ENCODE measurements at regions of chr2 and their contacts with region 1.

Region 1: DNA sequence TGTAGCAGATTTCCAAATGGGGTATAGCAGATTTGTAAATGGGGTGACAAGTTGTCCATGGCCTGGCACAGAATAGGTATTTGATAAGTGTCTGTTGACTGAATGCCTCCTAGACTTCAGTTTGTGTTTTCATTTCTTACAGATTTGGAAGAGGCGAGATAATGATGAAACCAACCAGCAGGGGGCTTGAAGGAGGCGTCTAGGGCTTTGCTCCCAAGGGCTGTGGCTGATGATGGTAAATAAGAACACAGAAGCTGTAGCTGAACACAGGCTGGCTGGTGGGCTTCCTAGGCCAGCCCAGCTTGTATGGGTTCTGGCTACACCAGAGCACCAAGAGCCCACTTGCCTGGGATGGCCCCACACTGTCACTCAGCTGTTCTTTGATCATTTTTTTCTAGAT is 19.4 kb downstream of the SFTPB start:
- DNase-seq: no peak
- H3K4me3 ChIP-seq: no peak overlapping the region
- H3K27me3 ChIP-seq: no peaks in the 10 kb centered on the region
- CTCF ChIP-seq: peak; percentile 68

Region 2: DNA sequence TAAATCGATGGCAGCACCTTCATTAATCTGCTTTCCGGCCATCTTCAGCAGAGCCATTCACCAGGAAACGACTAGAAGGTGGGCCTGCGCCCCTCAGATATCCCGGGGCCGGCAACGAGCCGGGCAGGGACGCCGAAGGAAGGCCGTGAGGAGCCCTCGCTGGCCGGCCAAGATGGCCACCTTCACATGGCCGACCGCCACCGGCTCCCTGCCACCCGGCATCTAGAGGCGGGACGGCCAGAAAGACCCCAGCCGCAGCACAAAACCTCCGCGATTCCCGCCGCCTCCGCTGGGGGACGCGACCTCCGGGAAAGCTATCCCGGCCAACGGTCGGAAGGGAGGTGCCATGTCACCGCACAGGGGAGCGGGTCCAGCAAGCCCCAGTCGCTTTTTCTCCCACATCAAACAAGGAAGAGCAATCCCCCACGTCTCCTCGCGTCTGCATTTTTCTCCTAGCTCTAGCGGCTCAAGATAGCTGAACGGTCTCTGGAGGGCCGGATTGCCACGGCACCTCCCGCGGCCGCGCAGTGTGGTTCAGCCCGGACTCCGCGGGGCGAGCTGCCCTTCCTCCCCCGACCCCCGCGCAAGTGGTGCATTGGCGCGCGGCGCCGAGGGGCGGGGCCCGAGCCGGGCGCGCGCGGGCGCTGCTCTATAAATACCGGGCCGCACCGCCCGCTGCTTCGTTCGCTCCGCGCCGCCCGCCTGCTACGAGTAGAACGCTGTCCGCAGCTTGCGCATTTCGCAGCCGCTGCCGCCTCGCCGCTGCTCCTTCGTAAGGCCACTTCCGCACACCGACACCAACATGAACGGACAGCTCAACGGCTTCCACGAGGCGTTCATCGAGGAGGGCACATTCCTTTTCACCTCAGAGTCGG is 109.9 kb before region 1 on chr2 and contains the start of gene MAT2A:
- CTCF ChIA-PET with region 1: no interaction called
- POLR2A ChIA-PET with region 1: interaction called, 17 read pairs
- DNase-seq: no peak
- H3K4me3 ChIP-seq: peak within 1 kb of the TSS; percentile 98
- H3K27me3 ChIP-seq: no peaks in the 10 kb centered on the region
- CTCF ChIP-seq: peak; percentile 83
- polyA plus RNA-seq, gene MAT2A: 261 and 302 TPM in 2 replicates

Region 3: DNA sequence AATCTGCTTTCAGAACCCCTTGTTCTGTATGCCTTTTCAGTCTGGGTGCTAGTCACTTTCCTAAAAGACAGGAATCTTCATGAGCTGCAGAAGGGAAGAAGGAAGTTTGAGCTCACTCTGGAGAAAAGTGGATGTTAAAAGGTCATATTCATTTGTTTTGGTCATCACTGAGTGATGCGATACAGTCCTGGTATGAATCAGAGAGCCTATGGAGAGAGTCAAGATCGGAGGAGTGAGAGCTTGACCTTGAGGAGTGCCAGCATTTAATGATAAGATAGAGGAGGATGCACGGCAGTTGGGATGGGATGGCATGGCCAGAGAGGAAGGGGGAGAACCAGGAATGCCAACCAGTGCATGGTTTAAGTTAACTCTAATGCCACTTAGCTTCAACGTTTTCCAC is 13.0 kb before region 1 on chr2:
- CTCF ChIA-PET with region 1: interaction called, 61 read pairs
- POLR2A ChIA-PET with region 1: no interaction called
- DNase-seq: no peak
- H3K4me3 ChIP-seq: no peak overlapping the region
- H3K27me3 ChIP-seq: no peaks in the 10 kb centered on the region
- CTCF ChIP-seq: no peak

Region 4: DNA sequence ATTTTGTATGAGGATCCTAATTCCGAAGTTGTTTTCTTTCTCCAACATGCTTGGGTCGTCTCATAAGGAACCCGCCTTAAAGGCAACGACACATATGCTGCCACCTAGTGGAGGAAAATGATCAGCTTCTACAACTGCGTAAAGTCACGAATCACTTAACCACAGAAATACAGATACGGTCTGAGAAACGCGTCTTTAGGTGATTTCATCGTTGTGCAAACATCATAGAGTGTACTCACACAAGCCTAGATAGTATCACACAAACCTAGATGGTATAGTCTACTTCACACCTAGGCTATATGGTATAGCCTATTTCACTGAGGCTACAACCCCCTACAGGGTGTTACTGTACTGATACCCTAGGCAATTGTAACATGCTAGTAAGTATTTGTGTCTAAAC is 58.7 kb after region 1 on chr2:
- CTCF ChIA-PET with region 1: interaction called, 81 read pairs
- POLR2A ChIA-PET with region 1: no interaction called
- DNase-seq: peak; percentile 58
- H3K4me3 ChIP-seq: no peak overlapping the region
- H3K27me3 ChIP-seq: no peaks in the 10 kb centered on the region; the same call in 1 of the 2 replicates
- CTCF ChIP-seq: peak; percentile 85

Region 5: GRCh38 chr2:85723707-85724360 is 75.2 kb after region 1 on chr2:
- CTCF ChIA-PET with region 1: interaction called, 11 read pairs
- POLR2A ChIA-PET with region 1: interaction called, 3 read pairs
- DNase-seq: no peak
- H3K4me3 ChIP-seq: no peak overlapping the region
- H3K27me3 ChIP-seq: no peaks in the 10 kb centered on the region
- CTCF ChIP-seq: no peak

Region 6: DNA sequence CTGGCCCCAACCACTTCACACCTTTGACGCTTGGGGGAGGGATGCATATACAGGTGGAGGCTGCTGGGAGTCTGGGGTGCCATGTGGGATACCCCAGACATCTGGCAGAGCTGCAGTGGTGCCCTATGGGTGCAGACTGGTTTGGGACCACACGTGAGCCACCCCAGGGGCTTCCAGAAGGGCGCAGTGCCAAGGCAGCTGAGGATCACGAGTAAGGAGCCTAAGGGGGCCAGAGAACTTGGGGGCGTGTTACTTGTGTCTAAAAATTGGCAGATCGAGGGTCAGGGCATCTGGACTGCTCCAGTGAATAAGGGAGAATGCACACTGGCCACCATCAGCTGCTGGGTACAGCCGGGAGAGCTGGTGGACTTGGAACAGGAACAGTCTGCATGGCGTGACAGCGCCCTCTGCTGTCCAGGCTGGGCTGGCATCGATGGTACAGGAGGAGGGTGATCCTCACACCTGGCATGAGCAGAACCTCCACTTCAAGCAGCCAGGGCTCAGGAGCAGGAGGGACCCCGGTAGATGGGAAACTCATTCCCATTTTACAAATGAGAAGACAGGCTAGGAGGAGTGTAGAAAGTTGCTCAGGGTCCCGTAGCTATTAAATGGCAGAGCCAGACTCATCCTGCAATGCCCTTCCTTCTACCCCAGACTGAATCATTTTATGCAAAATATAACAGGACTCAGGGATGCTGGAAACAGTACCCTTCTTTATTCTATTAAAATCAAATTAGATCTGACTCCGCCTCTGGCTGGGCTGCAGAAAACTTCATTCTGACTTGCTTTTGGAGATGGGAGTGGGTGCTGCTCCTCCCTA is 165.6 kb after region 1 on chr2:
- CTCF ChIA-PET with region 1: interaction called, 32 read pairs
- POLR2A ChIA-PET with region 1: no interaction called
- DNase-seq: no peak
- H3K4me3 ChIP-seq: no peak overlapping the region
- H3K27me3 ChIP-seq: no peaks in the 10 kb centered on the region
- CTCF ChIP-seq: peak; percentile 96

Region 7: DNA sequence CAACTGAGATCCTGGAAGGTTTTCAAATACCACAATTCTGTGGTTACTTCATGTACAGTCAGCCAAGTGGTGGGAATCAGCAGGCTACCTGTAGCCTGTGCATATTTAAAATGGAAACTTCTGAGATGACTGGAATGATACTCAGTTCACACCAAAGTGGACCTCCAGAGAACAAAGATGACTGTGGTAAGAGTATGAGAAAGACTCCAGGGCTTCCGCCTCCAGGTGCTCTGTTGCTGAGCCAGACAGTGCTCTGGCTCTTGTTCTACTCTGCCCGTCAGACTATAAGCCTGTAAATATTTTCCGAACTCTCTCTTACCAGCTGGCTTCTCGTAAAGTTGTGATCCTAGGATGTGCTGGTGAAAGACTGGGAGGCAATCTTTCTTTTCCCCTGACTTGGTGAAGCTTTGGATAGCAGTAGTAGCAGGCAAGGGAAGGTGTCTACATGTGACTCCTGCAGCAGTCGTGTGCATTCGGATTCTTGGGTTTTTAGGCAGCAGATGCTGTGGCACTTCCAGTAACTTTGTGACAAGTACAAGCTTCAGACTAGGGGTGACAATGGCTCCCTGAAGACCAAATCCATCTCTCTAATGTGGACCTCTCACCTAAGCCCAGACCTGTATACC is 217.0 kb after region 1 on chr2:
- CTCF ChIA-PET with region 1: no interaction called
- POLR2A ChIA-PET with region 1: no interaction called
- DNase-seq: no peak
- H3K4me3 ChIP-seq: no peak overlapping the region
- H3K27me3 ChIP-seq: no peaks in the 10 kb centered on the region
- CTCF ChIP-seq: no peak

Region 8: GRCh38 chr2:85911814-85912692 is 263.4 kb after region 1 on chr2:
- CTCF ChIA-PET with region 1: no interaction called
- POLR2A ChIA-PET with region 1: no interaction called
- DNase-seq: peak; percentile 49
- H3K4me3 ChIP-seq: no peak overlapping the region
- H3K27me3 ChIP-seq: no peaks in the 10 kb centered on the region
- CTCF ChIP-seq: no peak

Measured in BJ (cell line).